PC-9 (cell line): ENCODE measurements at regions of chr11 and their contacts with region 1.

Region 1: DNA sequence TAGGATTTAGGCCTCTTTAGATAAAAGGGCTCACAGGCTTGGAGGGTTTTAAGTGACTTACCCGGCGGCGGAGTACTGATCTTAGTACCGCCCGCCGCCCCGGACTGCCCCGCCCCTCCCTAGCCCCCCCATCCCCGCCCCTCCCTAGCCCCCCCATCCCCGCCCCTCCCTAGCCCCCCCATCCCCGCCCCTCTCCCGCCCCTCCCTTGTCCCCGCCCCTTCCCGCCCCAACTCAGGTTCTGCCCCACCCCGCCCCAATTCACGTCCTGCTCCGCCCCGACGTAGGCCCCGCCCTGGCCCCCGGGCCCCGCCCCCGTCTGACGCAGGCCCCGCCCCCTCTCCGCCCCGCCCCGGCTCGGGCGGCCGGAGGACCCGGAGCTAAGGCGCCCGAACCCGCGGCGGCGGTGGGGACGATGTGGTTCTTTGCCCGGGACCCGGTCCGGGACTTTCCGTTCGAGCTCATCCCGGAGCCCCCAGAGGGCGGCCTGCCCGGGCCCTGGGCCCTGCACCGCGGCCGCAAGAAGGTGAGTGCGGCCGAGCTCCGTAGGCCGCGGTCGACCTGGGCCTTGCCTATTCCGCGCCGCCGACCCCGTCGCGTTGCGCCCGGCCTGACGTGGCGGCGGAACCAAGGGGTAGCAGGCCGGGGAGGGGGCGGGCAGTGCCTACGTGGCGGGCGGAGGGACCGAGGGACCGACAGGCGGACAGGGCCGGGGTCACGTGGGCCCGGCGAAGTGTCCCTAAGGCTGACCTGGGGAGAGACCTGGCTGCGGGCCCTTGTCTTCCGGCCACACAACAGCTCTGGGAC is at the start of gene SCYL1:
- DNase-seq: peak in 1 of 2 experiments; percentile 82
- H3K4me3 ChIP-seq: peak within 1 kb of the TSS; percentile 100
- H3K27ac ChIP-seq: peak within 1 kb of the TSS; percentile 39; the same call in 1 of the 2 replicates
- H3K4me1 ChIP-seq: peaks cover 13% of the 10 kb centered on the region
- H3K27me3 ChIP-seq: no peaks in the 10 kb centered on the region
- CTCF ChIP-seq: no peak
- total RNA-seq, gene SCYL1: 106 and 135 TPM in 2 replicates

Region 2: GRCh38 chr11:65540297-65541092 is 15.6 kb after region 1 on chr11:
- CTCF ChIA-PET with region 1: interaction called, 6 read pairs
- POLR2A ChIA-PET with region 1: no interaction called
- intact Hi-C with region 1: loop called (anchors 1 kb)
- DNase-seq: peak; percentile 66 to 90
- H3K4me3 ChIP-seq: peak overlapping the region; percentile 46; the same call in 1 of the 2 replicates
- H3K27ac ChIP-seq: no peak overlapping the region
- H3K4me1 ChIP-seq: peaks cover 17% of the 10 kb centered on the region
- H3K27me3 ChIP-seq: no peaks in the 10 kb centered on the region
- CTCF ChIP-seq: peak; percentile 95

Region 3: GRCh38 chr11:65558002-65558931 is 33.3 kb after region 1 on chr11 and contains the start of gene LTBP3:
- CTCF ChIA-PET with region 1: no interaction called
- POLR2A ChIA-PET with region 1: interaction called, 13 read pairs
- intact Hi-C with region 1: no loop called
- DNase-seq: peak; percentile 71 to 92
- H3K4me3 ChIP-seq: peak within 1 kb of the TSS; percentile 77
- H3K27ac ChIP-seq: peak within 1 kb of the TSS; percentile 69
- H3K4me1 ChIP-seq: peaks cover 71% of the 10 kb centered on the region
- H3K27me3 ChIP-seq: no peaks in the 10 kb centered on the region
- CTCF ChIP-seq: no peak
- total RNA-seq, gene LTBP3: 455 and 553 TPM in 2 replicates

Region 4: DNA sequence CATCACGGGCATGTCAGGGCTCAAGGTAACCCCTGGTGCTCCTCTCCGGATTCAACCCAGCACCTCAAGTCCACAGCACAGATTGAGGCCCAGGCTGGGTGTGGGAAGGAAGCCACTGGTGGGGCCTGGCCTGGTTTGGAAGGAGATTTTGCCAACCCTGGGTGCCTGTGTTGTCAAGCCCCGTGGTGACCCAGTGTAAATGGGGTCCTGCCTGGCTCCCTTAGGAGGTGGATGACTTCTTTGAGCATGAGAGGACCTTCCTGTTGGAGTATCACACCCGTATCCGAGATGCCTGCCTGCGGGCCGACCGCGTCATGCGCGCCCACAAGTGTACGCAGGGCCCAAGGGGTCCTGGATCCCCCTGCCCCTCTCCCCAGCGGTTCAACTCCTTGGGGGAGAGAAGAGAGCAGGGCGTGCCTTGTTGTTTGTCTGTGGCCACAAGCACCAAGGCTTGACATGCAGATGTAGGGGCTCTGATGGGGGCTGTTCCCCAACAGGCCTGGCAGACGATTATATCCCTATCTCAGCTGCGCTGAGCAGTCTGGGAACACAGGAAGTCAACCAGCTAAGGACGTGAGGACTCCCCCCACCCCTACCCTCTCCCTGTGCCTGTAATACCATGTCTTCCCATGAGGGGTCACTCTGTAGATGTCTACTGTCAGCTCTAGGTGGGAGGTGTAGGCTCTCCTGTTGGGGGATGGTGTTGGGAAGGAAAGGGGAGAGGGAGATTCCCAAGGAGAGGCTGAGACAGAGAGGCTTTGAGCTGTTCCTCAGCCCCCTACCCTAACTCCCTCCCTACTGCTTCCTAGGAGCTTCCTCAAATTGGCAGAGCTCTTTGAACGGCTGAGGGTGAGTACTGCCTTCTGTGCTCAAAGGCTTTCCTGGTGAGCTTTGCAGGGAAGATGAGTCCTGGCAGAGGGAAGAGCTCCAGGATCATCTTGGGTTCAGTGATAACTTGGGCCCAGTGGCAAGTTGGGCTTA is 326.2 kb after region 1 on chr11:
- CTCF ChIA-PET with region 1: no interaction called
- POLR2A ChIA-PET with region 1: interaction called, 14 read pairs
- intact Hi-C with region 1: no loop called
- DNase-seq: peak in 1 of 2 experiments; percentile 35
- H3K4me3 ChIP-seq: no peak overlapping the region
- H3K27ac ChIP-seq: no peak overlapping the region
- H3K4me1 ChIP-seq: peaks cover 5% of the 10 kb centered on the region
- H3K27me3 ChIP-seq: no peaks in the 10 kb centered on the region
- CTCF ChIP-seq: peak; percentile 79